GM10248 (cell line): ENCODE measurements at regions of chr3 and their contacts with region 1.

Region 1: GRCh38 chr3:44198284-44199269 is 43.1 kb upstream of the TOPAZ1 start:
- DNase-seq: peak; percentile 77
- CTCF ChIP-seq: peak; percentile 81

Region 2: GRCh38 chr3:44184319-44184953 is 14.1 kb before region 1 on chr3:
- CTCF ChIA-PET with region 1: interaction called, 34 read pairs
- POLR2A ChIA-PET with region 1: no interaction called
- DNase-seq: no peak
- CTCF ChIP-seq: no peak

Region 3: GRCh38 chr3:44210967-44211366 is 12.4 kb after region 1 on chr3:
- CTCF ChIA-PET with region 1: interaction called, 17 read pairs
- POLR2A ChIA-PET with region 1: no interaction called
- DNase-seq: no peak
- CTCF ChIP-seq: no peak